Activated T-helper 1 cell treated with anti-CD3 and anti-CD28 coated beads, Interleukin-12 subunit alpha, Interleukin-12 subunit beta, Interleukin-2, Interleukin-4 antibody, amounts not matched to agents 30 ng/mL and 10 ng/mL and 1 ng/mL, durations not matched to agents 14 hours and 24 hours and 36 hours (primary cell): ENCODE measurements at regions of chr2 and their contacts with region 1.

Region 1: GRCh38 chr2:114331934-114332333 is 110.5 kb upstream of the DPP10 start:
- DNase-seq: no peak
- H3K4me3 Mint-ChIP-seq: no peak overlapping the region
- H3K27ac Mint-ChIP-seq: no peak overlapping the region
- H3K4me1 Mint-ChIP-seq: no peaks in the 10 kb centered on the region
- H3K27me3 Mint-ChIP-seq: no peaks in the 10 kb centered on the region

Region 2: DNA sequence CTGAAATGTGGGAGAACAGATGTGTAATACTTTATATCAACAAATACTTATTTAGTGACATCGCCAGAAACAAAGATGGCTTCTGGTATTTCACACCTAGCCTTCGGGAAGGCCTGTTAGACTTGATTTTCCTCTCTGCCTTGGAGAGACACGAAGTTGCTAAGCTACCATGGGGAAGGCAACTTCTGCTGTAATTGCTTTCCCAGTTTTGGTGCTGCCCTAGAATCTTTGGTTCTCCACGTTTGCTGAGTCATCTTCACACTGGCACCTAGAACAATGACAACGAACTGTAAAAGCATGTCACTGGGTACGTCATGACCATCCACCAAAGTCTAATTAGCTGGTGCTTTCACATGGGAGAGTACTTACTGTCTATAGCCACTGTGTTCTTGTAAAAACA is 500.8 kb before region 1 on chr2:
- intact Hi-C with region 1: no loop called
- DNase-seq: no peak
- H3K4me3 Mint-ChIP-seq: no peak overlapping the region
- H3K27ac Mint-ChIP-seq: no peak overlapping the region
- H3K4me1 Mint-ChIP-seq: no peaks in the 10 kb centered on the region
- H3K27me3 Mint-ChIP-seq: no peaks in the 10 kb centered on the region

Region 3: GRCh38 chr2:114346658-114347057 is 14.7 kb after region 1 on chr2:
- intact Hi-C with region 1: loop called (anchors 1 kb)
- DNase-seq: no peak
- H3K4me3 Mint-ChIP-seq: no peak overlapping the region
- H3K27ac Mint-ChIP-seq: no peak overlapping the region
- H3K4me1 Mint-ChIP-seq: no peaks in the 10 kb centered on the region
- H3K27me3 Mint-ChIP-seq: no peaks in the 10 kb centered on the region